ENCODE measurements at regions of chr16 and their contacts with region 1.

Region 1: GRCh38 chr16:22670551-22671041 is 143.4 kb upstream of the HS3ST2 start:
- DNase-seq: peak; percentile 49
- H3K4me3 ChIP-seq: no peak overlapping the region
- H3K27ac ChIP-seq: no peak overlapping the region
- H3K4me1 ChIP-seq: no peaks in the 10 kb centered on the region
- H3K27me3 ChIP-seq: peaks cover 23% of the 10 kb centered on the region
- CTCF ChIP-seq: no peak

Region 2: GRCh38 chr16:22333457-22333994 is 337.1 kb before region 1 on chr16:
- CTCF ChIA-PET with region 1: no interaction called
- POLR2A ChIA-PET with region 1: no interaction called
- intact Hi-C with region 1: loop called (anchors 10 kb)
- DNase-seq: no peak
- H3K4me3 ChIP-seq: no peak overlapping the region
- H3K27ac ChIP-seq: no peak overlapping the region
- H3K4me1 ChIP-seq: no peaks in the 10 kb centered on the region
- H3K27me3 ChIP-seq: no peaks in the 10 kb centered on the region
- CTCF ChIP-seq: no peak

Region 3: DNA sequence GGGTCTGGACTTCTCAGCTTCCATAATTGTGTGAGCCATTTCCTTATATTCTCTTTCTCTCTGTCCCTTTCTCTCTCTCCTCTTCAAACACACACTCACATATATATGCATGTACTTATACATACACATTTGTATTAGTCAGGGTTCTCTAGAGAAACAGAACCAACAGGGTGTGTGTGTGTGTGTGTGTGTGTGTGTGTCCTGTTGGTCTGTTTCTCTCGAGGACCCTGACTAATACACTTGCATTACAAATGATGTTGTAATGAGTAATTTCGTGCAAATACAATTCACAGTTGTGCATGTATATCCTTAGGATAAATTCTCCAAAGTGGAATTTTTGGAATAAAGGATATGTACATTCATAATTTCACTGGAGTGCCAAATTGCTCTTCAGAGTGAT is 44.6 kb before region 1 on chr16:
- CTCF ChIA-PET with region 1: no interaction called
- POLR2A ChIA-PET with region 1: no interaction called
- intact Hi-C with region 1: loop called (anchors 5 kb)
- DNase-seq: no peak
- H3K4me3 ChIP-seq: no peak overlapping the region
- H3K27ac ChIP-seq: no peak overlapping the region
- H3K4me1 ChIP-seq: no peaks in the 10 kb centered on the region
- H3K27me3 ChIP-seq: peaks cover 10% of the 10 kb centered on the region
- CTCF ChIP-seq: no peak

Region 4: GRCh38 chr16:22659933-22660332 is 10.7 kb before region 1 on chr16:
- CTCF ChIA-PET with region 1: no interaction called
- POLR2A ChIA-PET with region 1: no interaction called
- intact Hi-C with region 1: loop called (anchors 1 kb)
- DNase-seq: no peak
- H3K4me3 ChIP-seq: no peak overlapping the region
- H3K27ac ChIP-seq: no peak overlapping the region
- H3K4me1 ChIP-seq: no peaks in the 10 kb centered on the region
- H3K27me3 ChIP-seq: peaks cover 44% of the 10 kb centered on the region
- CTCF ChIP-seq: no peak

Region 5: GRCh38 chr16:22813223-22813945 is 142.8 kb after region 1 on chr16:
- CTCF ChIA-PET with region 1: no interaction called
- POLR2A ChIA-PET with region 1: no interaction called
- intact Hi-C with region 1: no loop called
- DNase-seq: peak; percentile 68
- H3K4me3 ChIP-seq: peak overlapping the region; percentile 23
- H3K27ac ChIP-seq: no peak overlapping the region
- H3K4me1 ChIP-seq: no peaks in the 10 kb centered on the region
- H3K27me3 ChIP-seq: peaks cover 88% of the 10 kb centered on the region
- CTCF ChIP-seq: peak; percentile 76

Measured in A673 (cell line).